CD4-positive, alpha-beta T cell (primary cell): ENCODE measurements at regions of chr5 and their contacts with region 1.

Region 1: DNA sequence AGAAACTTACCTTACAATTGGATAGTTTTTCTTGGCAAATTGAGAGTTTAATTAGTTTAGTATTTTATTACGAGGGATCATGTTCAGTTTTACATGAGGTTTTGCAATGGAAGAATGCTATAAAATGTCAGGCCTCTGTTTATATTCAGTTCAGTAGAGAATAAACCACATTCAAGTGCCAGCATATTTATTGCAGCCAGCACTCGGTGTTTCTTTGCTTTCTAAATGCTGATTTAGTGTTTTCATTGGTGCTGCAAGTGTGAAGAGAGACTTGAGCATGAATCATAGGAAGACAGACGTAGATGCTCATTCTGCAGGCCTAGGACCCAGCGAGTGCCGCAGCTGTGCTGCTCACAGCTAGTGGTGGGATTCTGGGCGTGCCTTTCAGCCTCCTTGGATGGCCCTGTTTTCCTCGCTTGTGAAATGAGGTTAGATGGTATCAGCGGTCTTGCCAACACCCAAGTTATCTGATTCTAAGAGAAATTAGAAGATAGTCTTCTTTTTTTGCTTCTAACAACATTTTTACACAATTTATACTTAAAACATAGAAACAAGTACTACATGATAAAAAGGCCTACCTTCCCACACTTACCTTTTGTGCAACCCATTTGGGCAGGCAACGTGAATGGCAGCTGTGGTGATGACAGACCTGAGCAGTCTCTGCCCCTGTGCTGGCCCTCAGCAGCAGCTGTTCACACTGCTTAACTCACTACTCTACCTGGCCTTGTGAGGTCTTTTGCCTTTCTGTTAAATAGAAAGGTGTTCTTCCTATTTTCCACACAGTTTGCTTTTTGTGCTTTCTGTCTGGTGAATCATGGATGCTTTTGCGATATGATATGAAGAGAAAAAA is 26.8 kb upstream of the TNFAIP8 start:
- DNase-seq: peak in 13 of 14 experiments; percentile 45 to 85 (median 67)
- ATAC-seq: peak; percentile 60
- H3K4me3 ChIP-seq: peak overlapping the region; percentile 13
- H3K4me3 Mint-ChIP-seq: peak overlapping the region; percentile 83
- H3K27ac ChIP-seq: peak overlapping the region; percentile 77 to 94
- H3K27ac Mint-ChIP-seq: peak overlapping the region; percentile 97
- H3K4me1 ChIP-seq: peaks cover 84% of the 10 kb centered on the region
- H3K4me1 Mint-ChIP-seq: peaks cover 94% of the 10 kb centered on the region
- H3K27me3 ChIP-seq: no peaks in the 10 kb centered on the region
- H3K27me3 Mint-ChIP-seq: no peaks in the 10 kb centered on the region
- CTCF ChIP-seq: no peak

Region 2: GRCh38 chr5:119274767-119275130 is 54.2 kb before region 1 on chr5:
- CTCF ChIA-PET with region 1: interaction called, 3 read pairs
- POLR2A ChIA-PET with region 1: interaction called, 84 read pairs
- intact Hi-C with region 1: loop called (anchors 2 kb)
- DNase-seq: peak in 4 of 14 experiments; percentile 44 to 81 (median 70)
- ATAC-seq: peak; percentile 38
- H3K4me3 ChIP-seq: peak overlapping the region; percentile 69
- H3K4me3 Mint-ChIP-seq: peak overlapping the region; percentile 99
- H3K27ac ChIP-seq: peak overlapping the region; percentile 67 to 84
- H3K27ac Mint-ChIP-seq: peak overlapping the region; percentile 97
- H3K4me1 ChIP-seq: peaks cover 84% of the 10 kb centered on the region
- H3K4me1 Mint-ChIP-seq: peaks cover 96% of the 10 kb centered on the region
- H3K27me3 ChIP-seq: no peaks in the 10 kb centered on the region
- H3K27me3 Mint-ChIP-seq: peaks cover 6% of the 10 kb centered on the region
- CTCF ChIP-seq: no peak

Region 3: GRCh38 chr5:119290161-119290569 is 38.8 kb before region 1 on chr5:
- CTCF ChIA-PET with region 1: interaction called, 4 read pairs
- POLR2A ChIA-PET with region 1: interaction called, 11 read pairs
- intact Hi-C with region 1: no loop called
- DNase-seq: peak in 4 of 14 experiments; percentile 23 to 69 (median 66)
- ATAC-seq: peak; percentile 28
- H3K4me3 ChIP-seq: peak overlapping the region; percentile 28
- H3K4me3 Mint-ChIP-seq: peak overlapping the region; percentile 76
- H3K27ac ChIP-seq: peak overlapping the region; percentile 68 to 89
- H3K27ac Mint-ChIP-seq: peak overlapping the region; percentile 97
- H3K4me1 ChIP-seq: peaks cover 42% of the 10 kb centered on the region
- H3K4me1 Mint-ChIP-seq: peaks cover 83% of the 10 kb centered on the region
- H3K27me3 ChIP-seq: no peaks in the 10 kb centered on the region
- H3K27me3 Mint-ChIP-seq: no peaks in the 10 kb centered on the region
- CTCF ChIP-seq: no peak

Region 4: GRCh38 chr5:119309326-119309725 is 19.7 kb before region 1 on chr5:
- CTCF ChIA-PET with region 1: interaction called, 6 read pairs
- POLR2A ChIA-PET with region 1: interaction called, 9 read pairs
- intact Hi-C with region 1: loop called in 1 of 2 experiments (anchors 1 kb)
- DNase-seq: peak in 3 of 14 experiments; percentile 23 to 52 (median 40)
- ATAC-seq: peak; percentile 39
- H3K4me3 ChIP-seq: peak overlapping the region; percentile 19
- H3K4me3 Mint-ChIP-seq: peak overlapping the region; percentile 82
- H3K27ac ChIP-seq: peak overlapping the region; percentile 63 to 71
- H3K27ac Mint-ChIP-seq: peak overlapping the region; percentile 95
- H3K4me1 ChIP-seq: peaks cover 70% of the 10 kb centered on the region
- H3K4me1 Mint-ChIP-seq: peaks cover 96% of the 10 kb centered on the region
- H3K27me3 ChIP-seq: no peaks in the 10 kb centered on the region
- H3K27me3 Mint-ChIP-seq: no peaks in the 10 kb centered on the region
- CTCF ChIP-seq: no peak

Region 5: GRCh38 chr5:119397518-119398380 is 68.8 kb after region 1 on chr5:
- CTCF ChIA-PET with region 1: no interaction called
- POLR2A ChIA-PET with region 1: no interaction called
- intact Hi-C with region 1: no loop called
- DNase-seq: peak in 2 of 14 experiments; percentile 49 to 63
- ATAC-seq: peak; percentile 37
- H3K4me3 ChIP-seq: no peak overlapping the region
- H3K4me3 Mint-ChIP-seq: peak overlapping the region; percentile 8
- H3K27ac ChIP-seq: no peak overlapping the region
- H3K27ac Mint-ChIP-seq: peak overlapping the region; percentile 80
- H3K4me1 ChIP-seq: peaks cover 19% of the 10 kb centered on the region
- H3K4me1 Mint-ChIP-seq: peaks cover 65% of the 10 kb centered on the region
- H3K27me3 ChIP-seq: no peaks in the 10 kb centered on the region
- H3K27me3 Mint-ChIP-seq: no peaks in the 10 kb centered on the region
- CTCF ChIP-seq: no peak

Region 6: DNA sequence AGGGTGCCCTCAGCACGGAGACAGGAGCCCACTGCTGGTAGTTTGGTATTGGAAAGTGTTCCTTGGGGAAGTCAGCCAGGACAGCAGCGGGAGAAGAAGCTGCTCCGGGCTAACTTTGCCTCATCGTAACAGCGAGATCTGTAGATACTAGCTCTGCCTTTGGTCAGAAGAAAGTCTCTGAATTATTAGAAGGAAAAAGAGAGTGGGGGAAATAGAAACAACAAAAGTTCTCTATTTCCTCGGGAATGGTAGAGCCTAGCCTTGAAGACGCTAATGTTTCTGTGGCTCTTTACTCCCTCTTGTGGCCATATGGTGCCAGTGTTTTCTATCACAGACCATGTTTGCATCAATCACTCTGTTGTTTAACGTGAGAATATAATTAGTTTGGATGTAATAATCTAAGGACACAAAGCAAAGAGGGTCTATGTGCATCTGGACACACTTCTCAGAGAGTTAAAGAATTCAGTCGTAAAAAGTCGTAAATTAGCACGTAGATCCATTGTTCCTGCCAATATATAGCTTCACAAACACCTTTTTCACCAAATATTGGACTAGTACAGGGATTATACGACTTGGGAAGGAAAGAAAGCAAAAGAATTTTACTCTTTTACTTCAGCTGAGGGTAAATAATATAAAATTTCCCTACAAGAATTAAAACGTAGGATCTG is 83.1 kb after region 1 on chr5:
- CTCF ChIA-PET with region 1: interaction called, 10 read pairs
- POLR2A ChIA-PET with region 1: interaction called, 3 read pairs
- intact Hi-C with region 1: loop called in 1 of 2 experiments (anchors 5 kb)
- DNase-seq: peak in 13 of 14 experiments; percentile 11 to 87 (median 43)
- ATAC-seq: peak; percentile 94
- H3K4me3 ChIP-seq: peak overlapping the region; percentile 62
- H3K4me3 Mint-ChIP-seq: peak overlapping the region; percentile 85
- H3K27ac ChIP-seq: no peak overlapping the region
- H3K27ac Mint-ChIP-seq: peak overlapping the region; percentile 31
- H3K4me1 ChIP-seq: peaks cover 8% of the 10 kb centered on the region
- H3K4me1 Mint-ChIP-seq: peaks cover 20% of the 10 kb centered on the region
- H3K27me3 ChIP-seq: no peaks in the 10 kb centered on the region
- H3K27me3 Mint-ChIP-seq: no peaks in the 10 kb centered on the region
- CTCF ChIP-seq: peak; percentile 92